Activated T-helper 2 cell treated with anti-CD3 and anti-CD28 coated beads, Interferon-gamma antibody, Interleukin-2, Interleukin-4, amounts not matched to agents 10 μg/mL and 5 μg/mL and 100 μg/mL, durations not matched to agents 14 hours and 24 hours and 36 hours (primary cell): ENCODE measurements at regions of chr9 and their contacts with region 1.

Region 1: DNA sequence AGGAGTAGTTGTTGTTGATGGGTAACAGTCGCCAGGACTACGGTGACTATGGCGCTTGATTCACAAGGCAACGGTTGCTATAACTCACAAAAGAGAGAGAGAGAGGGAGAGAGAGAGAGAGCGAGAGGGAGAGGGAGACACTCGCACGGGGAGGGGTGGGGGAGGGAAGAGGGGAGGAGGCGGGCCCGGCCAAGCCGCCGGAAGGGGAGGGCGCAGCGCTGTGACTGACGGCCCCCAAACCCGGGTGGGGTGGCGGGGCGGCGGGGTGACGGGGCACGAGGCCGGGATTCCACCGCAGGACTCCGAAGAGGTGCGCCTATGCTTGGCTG is at the start of gene RFX3:
- DNase-seq: peak; percentile 85
- H3K4me3 Mint-ChIP-seq: peak within 1 kb of the TSS; percentile 93
- H3K27ac Mint-ChIP-seq: peak within 1 kb of the TSS; percentile 98
- H3K4me1 Mint-ChIP-seq: peaks cover 46% of the 10 kb centered on the region
- H3K27me3 Mint-ChIP-seq: no peaks in the 10 kb centered on the region
- total RNA-seq, gene RFX3: 11.3 and 11.9 TPM in 2 replicates

Region 2: GRCh38 chr9:2014696-2015580 is 1510.9 kb before region 1 on chr9 and contains the start of gene SMARCA2:
- intact Hi-C with region 1: loop called (anchors 5 kb)
- DNase-seq: peak; percentile 97
- H3K4me3 Mint-ChIP-seq: peak within 1 kb of the TSS; percentile 98
- H3K27ac Mint-ChIP-seq: peak within 1 kb of the TSS; percentile 99
- H3K4me1 Mint-ChIP-seq: peaks cover 39% of the 10 kb centered on the region
- H3K27me3 Mint-ChIP-seq: peaks cover 9% of the 10 kb centered on the region
- total RNA-seq, gene SMARCA2: 84.5 and 90.4 TPM in 2 replicates

Region 3: DNA sequence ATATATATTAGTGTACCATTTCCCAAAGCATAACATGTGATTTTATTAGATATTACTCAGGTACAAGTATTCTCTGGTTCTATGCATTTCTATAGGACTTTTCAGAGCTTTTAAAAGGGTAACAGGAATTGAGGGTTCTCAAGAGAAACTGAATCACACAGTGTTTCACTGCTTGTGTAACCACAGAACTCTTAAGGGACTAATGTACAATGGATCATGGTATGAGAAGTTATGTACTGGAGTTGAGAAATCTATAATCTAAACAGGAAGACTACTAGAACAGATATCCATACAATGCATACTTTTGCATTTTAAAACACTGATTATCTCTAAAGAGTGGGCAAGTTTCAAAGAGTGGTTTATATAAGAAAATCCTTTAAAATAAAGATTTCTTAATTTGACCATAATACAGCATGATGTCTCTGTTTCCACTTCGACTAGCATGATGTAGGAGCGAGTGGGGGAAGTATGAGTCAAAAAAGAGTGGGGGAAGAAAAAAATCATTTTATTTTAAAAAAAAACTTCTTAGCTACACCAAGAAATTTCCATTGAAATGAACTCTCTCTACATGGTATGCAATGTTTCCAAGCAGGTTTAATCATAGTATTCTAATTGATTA is 183.5 kb before region 1 on chr9:
- intact Hi-C with region 1: loop called (anchors 5 kb)
- DNase-seq: no peak
- H3K4me3 Mint-ChIP-seq: peak overlapping the region; percentile 47
- H3K27ac Mint-ChIP-seq: peak overlapping the region; percentile 80
- H3K4me1 Mint-ChIP-seq: peaks cover 21% of the 10 kb centered on the region
- H3K27me3 Mint-ChIP-seq: no peaks in the 10 kb centered on the region

Region 4: DNA sequence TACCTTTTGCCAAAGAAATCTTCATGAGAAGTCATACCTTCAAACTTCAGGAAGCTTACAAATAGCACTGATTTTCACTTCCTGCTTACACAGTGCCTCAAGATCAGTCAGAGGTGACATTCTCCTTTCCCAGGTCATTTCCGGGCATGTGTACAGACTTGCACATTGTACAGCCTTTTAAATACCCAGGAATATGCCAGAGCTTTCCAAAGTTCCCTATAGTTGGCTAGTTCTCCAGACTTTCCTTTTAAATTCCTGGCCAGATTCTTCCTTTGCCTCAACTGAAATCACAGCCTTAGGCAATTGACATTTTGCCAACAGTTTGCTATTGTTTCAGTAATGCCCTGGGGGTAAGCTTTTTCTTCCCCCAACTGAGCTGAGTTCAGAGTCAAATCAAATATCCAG is 47.2 kb before region 1 on chr9:
- intact Hi-C with region 1: loop called (anchors 1 kb)
- DNase-seq: no peak
- H3K4me3 Mint-ChIP-seq: peak overlapping the region; percentile 79
- H3K27ac Mint-ChIP-seq: peak overlapping the region; percentile 90
- H3K4me1 Mint-ChIP-seq: peaks cover 61% of the 10 kb centered on the region
- H3K27me3 Mint-ChIP-seq: no peaks in the 10 kb centered on the region

Region 5: GRCh38 chr9:3868012-3868411 is 342.2 kb after region 1 on chr9:
- intact Hi-C with region 1: loop called (anchors 5 kb)
- DNase-seq: no peak
- H3K4me3 Mint-ChIP-seq: no peak overlapping the region
- H3K27ac Mint-ChIP-seq: no peak overlapping the region
- H3K4me1 Mint-ChIP-seq: peaks cover 57% of the 10 kb centered on the region
- H3K27me3 Mint-ChIP-seq: no peaks in the 10 kb centered on the region

Region 6: DNA sequence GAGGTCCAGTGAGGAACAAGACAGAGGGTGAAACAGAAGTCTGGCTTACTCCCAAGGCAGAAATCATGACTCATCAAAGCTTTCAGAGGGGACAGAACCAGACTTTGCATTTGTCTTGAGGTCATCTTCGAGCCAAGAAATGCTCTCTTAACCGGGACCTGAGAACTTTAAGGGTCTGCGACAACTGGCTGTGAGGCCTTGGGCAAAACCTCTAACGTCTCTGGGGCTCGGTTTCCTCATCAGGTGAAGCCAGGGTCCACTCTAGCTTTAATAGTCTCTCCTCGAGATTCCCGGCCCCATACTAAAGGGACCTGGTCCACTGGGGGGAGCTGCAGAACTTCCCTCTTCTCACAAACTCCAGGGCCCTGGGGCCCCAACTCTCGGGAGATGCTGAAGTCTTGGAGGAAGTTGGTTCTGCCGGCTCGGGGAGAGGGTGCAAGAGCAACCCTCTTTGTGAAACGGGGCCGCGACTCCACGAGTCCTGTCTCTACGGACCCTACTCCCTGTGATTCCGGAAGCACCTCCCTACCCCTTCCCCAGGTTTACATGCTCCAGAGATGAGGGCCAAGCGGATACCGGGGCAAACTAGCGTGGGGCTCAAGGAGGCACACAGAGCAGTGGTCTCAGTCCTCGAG is 771.5 kb after region 1 on chr9:
- intact Hi-C with region 1: loop called (anchors 2 kb)
- DNase-seq: peak; percentile 22
- H3K4me3 Mint-ChIP-seq: peak overlapping the region; percentile 97
- H3K27ac Mint-ChIP-seq: peak overlapping the region; percentile 87
- H3K4me1 Mint-ChIP-seq: peaks cover 49% of the 10 kb centered on the region
- H3K27me3 Mint-ChIP-seq: peaks cover 56% of the 10 kb centered on the region

Region 7: DNA sequence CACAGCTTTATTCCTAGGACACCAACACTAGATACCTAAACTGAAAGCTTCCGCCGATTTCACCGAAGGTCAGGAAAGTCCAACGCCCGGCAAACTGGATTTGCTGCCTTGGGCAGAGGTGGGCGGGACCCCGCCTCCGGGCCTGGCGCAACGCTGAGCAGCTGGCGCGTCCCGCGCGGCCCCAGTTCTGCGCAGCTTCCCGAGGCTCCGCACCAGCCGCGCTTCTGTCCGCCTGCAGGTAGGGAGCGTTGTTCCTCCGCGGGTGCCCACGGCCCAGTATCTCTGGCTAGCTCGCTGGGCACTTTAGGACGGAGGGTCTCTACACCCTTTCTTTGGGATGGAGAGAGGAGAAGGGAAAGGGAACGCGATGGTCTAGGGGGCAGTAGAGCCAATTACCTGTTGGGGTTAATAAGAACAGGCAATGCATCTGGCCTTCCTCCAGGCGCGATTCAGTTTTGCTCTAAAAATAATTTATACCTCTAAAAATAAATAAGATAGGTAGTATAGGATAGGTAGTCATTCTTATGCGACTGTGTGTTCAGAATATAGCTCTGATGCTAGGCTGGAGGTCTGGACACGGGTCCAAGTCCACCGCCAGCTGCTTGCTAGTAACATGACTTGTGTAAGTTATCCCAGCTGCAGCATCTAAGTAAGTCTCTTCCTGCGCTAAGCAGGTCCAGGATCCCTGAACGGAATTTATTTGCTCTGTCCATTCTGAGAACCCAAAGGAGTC is 1924.7 kb after region 1 on chr9 and contains the start of gene CD274:
- intact Hi-C with region 1: loop called (anchors 10 kb)
- DNase-seq: peak; percentile 77
- H3K4me3 Mint-ChIP-seq: peak within 1 kb of the TSS; percentile 97
- H3K27ac Mint-ChIP-seq: peak within 1 kb of the TSS; percentile 92
- H3K4me1 Mint-ChIP-seq: peaks cover 71% of the 10 kb centered on the region
- H3K27me3 Mint-ChIP-seq: no peaks in the 10 kb centered on the region
- total RNA-seq, gene CD274: 36.7 and 40.5 TPM in 2 replicates